Right cardiac atrium (tissue), 5 donors: ENCODE measurements at regions of chr14 and their contacts with region 1.

Region 1: GRCh38 chr14:92456215-92457015 is 57.2 kb upstream of the RIN3 start:
- DNase-seq: peak; percentile 63 to 81 (median 74)
- ATAC-seq: peak; percentile 68 to 70
- H3K4me3 ChIP-seq: no peak overlapping the region
- H3K27ac ChIP-seq: no peak overlapping the region
- H3K4me1 ChIP-seq: no peaks in the 10 kb centered on the region
- H3K27me3 ChIP-seq: no peaks in the 10 kb centered on the region

Region 2: DNA sequence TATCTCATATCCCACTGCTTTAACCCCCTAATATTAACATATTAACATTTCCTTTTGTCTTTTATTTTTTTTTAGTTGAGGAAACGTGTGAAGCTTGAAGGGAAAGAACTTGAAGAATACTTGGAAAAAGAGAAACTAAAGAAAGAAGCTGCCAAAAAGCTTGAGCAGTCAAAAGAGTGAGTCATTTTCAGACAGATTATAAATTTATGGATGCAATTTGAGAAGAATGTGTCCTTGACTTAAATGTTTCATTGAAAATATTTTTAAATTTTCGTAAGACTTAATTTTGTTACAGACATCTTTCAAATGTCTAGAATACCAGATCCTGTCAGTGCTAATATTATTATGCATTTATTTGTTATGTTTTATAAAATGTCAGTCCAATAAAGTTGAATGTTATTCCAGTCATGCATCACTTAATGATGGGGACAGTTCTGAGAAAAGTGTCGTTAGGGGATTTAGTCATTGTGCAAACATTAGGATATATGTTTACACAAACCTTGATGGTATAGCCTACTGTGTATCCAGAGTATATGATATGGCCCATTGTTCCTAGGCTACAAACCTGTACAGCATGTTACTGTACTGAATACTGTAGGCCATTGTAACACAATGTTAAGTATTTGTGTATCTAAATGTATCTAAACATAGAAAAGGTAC is 302.0 kb before region 1 on chr14:
- intact Hi-C with region 1: loop called in 1 of 4 experiments (anchors 10 kb)
- DNase-seq: no peak
- ATAC-seq: no peak
- H3K4me3 ChIP-seq: no peak overlapping the region
- H3K27ac ChIP-seq: no peak overlapping the region
- H3K4me1 ChIP-seq: no peaks in the 10 kb centered on the region
- H3K27me3 ChIP-seq: no peaks in the 10 kb centered on the region

Region 3: DNA sequence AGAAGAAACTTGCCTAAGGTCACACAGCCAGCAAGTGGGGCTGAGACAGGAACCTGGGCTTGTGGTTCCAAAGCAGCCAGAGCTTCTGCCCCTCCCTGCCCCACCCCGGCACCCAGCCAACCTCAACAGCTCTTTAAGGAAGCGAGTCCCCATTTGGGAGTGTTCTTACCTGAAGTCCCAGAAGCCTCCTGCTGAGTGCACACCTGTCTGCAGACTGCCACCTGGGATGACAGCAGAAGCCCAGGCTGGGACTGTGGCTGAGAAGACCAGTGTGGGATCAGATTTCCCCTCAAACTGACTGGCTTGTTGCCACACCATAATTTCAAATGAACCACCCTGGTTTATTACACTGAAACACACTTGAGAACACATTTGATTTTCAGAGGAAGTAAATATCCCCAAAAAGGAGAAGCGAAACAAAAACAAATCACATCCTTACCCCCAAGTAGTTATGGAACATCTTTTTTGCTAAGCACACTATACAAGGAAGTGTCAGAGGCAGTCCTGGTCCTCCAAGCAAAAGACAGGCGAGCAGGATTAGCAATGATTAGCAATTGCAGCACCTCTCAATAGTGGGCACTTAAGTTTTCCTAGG is 50.9 kb after region 1 on chr14:
- intact Hi-C with region 1: no loop called
- DNase-seq: peak in 2 of 3 donors; percentile 66 to 72
- ATAC-seq: peak in 1 of 2 donors; percentile 53
- H3K4me3 ChIP-seq: no peak overlapping the region
- H3K27ac ChIP-seq: no peak overlapping the region
- H3K4me1 ChIP-seq: peaks cover 7% of the 10 kb centered on the region
- H3K27me3 ChIP-seq: no peaks in the 10 kb centered on the region